ENCODE measurements at regions of chr1 and their contacts with region 1.

Region 1: GRCh38 chr1:41360993-41361753 is at the start of gene FOXO6:
- DNase-seq: peak; percentile 98
- ATAC-seq: peak; percentile 86
- H3K4me3 Mint-ChIP-seq: peak within 1 kb of the TSS; percentile 70
- H3K27ac Mint-ChIP-seq: no peak within 1 kb of the TSS
- H3K4me1 Mint-ChIP-seq: peaks cover 54% of the 10 kb centered on the region
- H3K27me3 Mint-ChIP-seq: peaks cover 63% of the 10 kb centered on the region
- CTCF ChIP-seq: peak; percentile 67
- total RNA-seq, gene FOXO6: 5.4 to 7.4 TPM (median 7.0 TPM) in 3 replicates

Region 2: DNA sequence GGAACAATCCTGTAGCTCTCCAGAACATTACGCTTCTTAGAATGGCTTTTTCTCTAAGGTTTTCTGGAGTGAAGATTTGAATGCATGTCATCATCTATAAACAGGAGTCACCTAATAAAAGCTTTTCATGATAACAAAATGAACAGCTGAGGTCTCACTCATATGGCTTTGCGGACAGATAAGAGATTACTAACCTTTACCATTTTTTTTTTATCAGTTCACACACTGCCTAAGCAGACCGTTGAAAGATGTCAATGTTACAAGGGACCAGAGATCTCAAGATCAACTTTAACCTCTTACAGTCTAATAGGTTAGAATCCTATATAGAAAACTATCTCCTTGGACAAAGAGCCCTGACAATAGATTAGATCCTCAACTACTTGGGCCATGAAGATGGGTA is 160.4 kb before region 1 on chr1:
- CTCF ChIA-PET with region 1: no interaction called
- POLR2A ChIA-PET with region 1: no interaction called
- DNase-seq: no peak
- ATAC-seq: no peak
- H3K4me3 Mint-ChIP-seq: no peak overlapping the region
- H3K27ac Mint-ChIP-seq: no peak overlapping the region
- H3K4me1 Mint-ChIP-seq: no peaks in the 10 kb centered on the region
- H3K27me3 Mint-ChIP-seq: peaks cover 4% of the 10 kb centered on the region; the same call in 1 of the 2 replicates
- CTCF ChIP-seq: no peak

Region 3: GRCh38 chr1:41282679-41283317 is 78.4 kb before region 1 on chr1:
- CTCF ChIA-PET with region 1: interaction called, 37 read pairs
- POLR2A ChIA-PET with region 1: no interaction called
- DNase-seq: peak; percentile 73
- ATAC-seq: peak; percentile 88
- H3K4me3 Mint-ChIP-seq: no peak overlapping the region
- H3K27ac Mint-ChIP-seq: no peak overlapping the region
- H3K4me1 Mint-ChIP-seq: peaks cover 15% of the 10 kb centered on the region
- H3K27me3 Mint-ChIP-seq: peaks cover 22% of the 10 kb centered on the region
- CTCF ChIP-seq: peak; percentile 63; the same call in 1 of the 2 replicates

Region 4: GRCh38 chr1:41333146-41333784 is 27.9 kb before region 1 on chr1:
- CTCF ChIA-PET with region 1: interaction called, 36 read pairs
- POLR2A ChIA-PET with region 1: interaction called, 3 read pairs
- DNase-seq: no peak
- ATAC-seq: no peak
- H3K4me3 Mint-ChIP-seq: no peak overlapping the region
- H3K27ac Mint-ChIP-seq: no peak overlapping the region
- H3K4me1 Mint-ChIP-seq: peaks cover 11% of the 10 kb centered on the region
- H3K27me3 Mint-ChIP-seq: peaks cover under 1% of the 10 kb centered on the region
- CTCF ChIP-seq: no peak

Region 5: GRCh38 chr1:41381692-41382477 is 20.7 kb after region 1 on chr1:
- CTCF ChIA-PET with region 1: interaction called, 21 read pairs
- POLR2A ChIA-PET with region 1: interaction called, 8 read pairs
- DNase-seq: peak; percentile 44
- ATAC-seq: peak; percentile 36
- H3K4me3 Mint-ChIP-seq: peak overlapping the region; percentile 75
- H3K27ac Mint-ChIP-seq: no peak overlapping the region
- H3K4me1 Mint-ChIP-seq: peaks cover 43% of the 10 kb centered on the region
- H3K27me3 Mint-ChIP-seq: peaks cover 57% of the 10 kb centered on the region
- CTCF ChIP-seq: no peak

Region 6: DNA sequence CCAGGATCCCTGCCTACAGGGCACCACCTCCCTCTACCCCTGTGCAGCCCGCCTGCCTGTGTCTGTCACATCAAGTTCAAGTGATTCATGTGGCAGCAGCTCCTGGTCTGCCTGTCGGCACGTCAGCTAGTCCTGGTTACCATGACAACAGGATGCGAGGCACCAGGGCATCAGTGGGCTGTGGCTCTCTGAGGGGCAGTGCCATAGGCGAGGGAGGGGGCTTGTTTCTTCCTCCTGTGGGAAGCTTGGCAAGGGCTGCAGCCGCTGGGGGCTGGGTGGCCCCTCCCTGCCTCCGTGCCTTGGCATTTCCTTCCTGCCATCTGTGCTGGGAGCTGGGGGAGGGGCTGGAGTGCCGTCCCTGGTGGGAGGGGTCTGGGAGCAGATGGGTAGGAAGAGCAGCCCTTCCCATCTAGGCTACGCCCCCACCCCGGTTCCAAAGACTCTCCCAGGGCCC is 43.2 kb after region 1 on chr1:
- CTCF ChIA-PET with region 1: interaction called, 16 read pairs
- POLR2A ChIA-PET with region 1: interaction called, 4 read pairs
- DNase-seq: peak; percentile 53
- ATAC-seq: peak; percentile 69
- H3K4me3 Mint-ChIP-seq: 0 out of 2 replicates have a peak overlapping the region, but pooled peaks have one; percentile 12
- H3K27ac Mint-ChIP-seq: no peak overlapping the region
- H3K4me1 Mint-ChIP-seq: peaks cover 39% of the 10 kb centered on the region
- H3K27me3 Mint-ChIP-seq: peaks cover 19% of the 10 kb centered on the region
- CTCF ChIP-seq: no peak

Region 7: DNA sequence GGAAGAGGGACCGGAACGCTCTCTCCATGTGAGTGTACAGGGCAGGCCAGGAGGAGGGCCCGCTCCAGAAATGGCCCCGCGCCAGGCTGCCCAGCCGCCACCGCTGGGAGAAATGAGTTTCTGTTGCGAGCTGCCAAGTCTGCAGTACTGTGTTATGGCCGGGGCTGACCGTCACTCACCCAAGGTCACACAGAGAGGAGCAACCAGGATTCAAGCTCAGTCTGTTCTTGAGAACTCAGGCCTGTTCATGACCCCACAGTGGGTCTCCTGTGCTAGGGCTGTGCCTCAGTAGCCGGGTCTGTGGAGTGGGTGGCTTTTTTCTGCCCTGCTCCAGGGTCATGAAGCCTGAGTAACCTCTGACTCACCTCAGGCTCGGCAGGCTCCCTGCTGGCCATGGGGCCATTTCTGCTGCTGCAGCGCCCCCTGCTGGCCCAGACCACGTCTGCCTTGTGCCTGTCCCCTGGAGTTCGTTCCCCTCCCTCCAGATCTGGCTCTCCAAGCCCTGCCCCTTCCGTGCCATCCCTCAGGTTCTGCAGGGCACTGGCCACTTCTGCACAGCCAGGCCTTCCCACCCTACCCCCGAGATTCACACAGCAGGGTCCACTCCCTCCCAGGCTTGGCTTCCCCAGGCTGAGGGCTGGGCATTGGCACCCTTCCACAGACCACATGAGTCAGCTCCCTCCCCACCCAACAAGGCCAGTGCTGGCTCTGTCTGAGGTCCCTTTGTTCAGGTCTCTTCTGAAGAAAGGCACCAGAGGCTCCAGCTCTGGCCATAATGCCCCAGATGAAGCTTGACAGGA is 71.5 kb after region 1 on chr1:
- CTCF ChIA-PET with region 1: interaction called, 14 read pairs
- POLR2A ChIA-PET with region 1: no interaction called
- DNase-seq: peak; percentile 94
- ATAC-seq: peak; percentile 85
- H3K4me3 Mint-ChIP-seq: no peak overlapping the region
- H3K27ac Mint-ChIP-seq: no peak overlapping the region
- H3K4me1 Mint-ChIP-seq: peaks cover 33% of the 10 kb centered on the region
- H3K27me3 Mint-ChIP-seq: peaks cover 3% of the 10 kb centered on the region; the same call in 1 of the 2 replicates
- CTCF ChIP-seq: peak; percentile 98